ENCODE measurements at regions of chr3 and their contacts with region 1.

Region 1: GRCh38 chr3:170330366-170330765 is 27.1 kb upstream of the SKIL start:
- DNase-seq: peak; percentile 19 to 48
- H3K4me3 ChIP-seq: no peak overlapping the region
- H3K4me3 Mint-ChIP-seq: no peak overlapping the region
- H3K27ac Mint-ChIP-seq: peak overlapping the region; percentile 76
- H3K4me1 ChIP-seq: peaks cover 25% of the 10 kb centered on the region
- H3K4me1 Mint-ChIP-seq: no peaks in the 10 kb centered on the region
- H3K27me3 ChIP-seq: no peaks in the 10 kb centered on the region
- H3K27me3 Mint-ChIP-seq: no peaks in the 10 kb centered on the region
- CTCF ChIP-seq: no peak

Region 2: GRCh38 chr3:170307671-170308403 is 22.5 kb before region 1 on chr3:
- CTCF ChIA-PET with region 1: no interaction called
- POLR2A ChIA-PET with region 1: no interaction called
- intact Hi-C with region 1: loop called (anchors 1 kb)
- DNase-seq: peak; percentile 63 to 66
- H3K4me3 ChIP-seq: no peak overlapping the region
- H3K4me3 Mint-ChIP-seq: peak overlapping the region; percentile 29
- H3K27ac Mint-ChIP-seq: peak overlapping the region; percentile 91
- H3K4me1 ChIP-seq: peaks cover 29% of the 10 kb centered on the region
- H3K4me1 Mint-ChIP-seq: peaks cover 11% of the 10 kb centered on the region
- H3K27me3 ChIP-seq: no peaks in the 10 kb centered on the region
- H3K27me3 Mint-ChIP-seq: no peaks in the 10 kb centered on the region
- CTCF ChIP-seq: no peak

Region 3: DNA sequence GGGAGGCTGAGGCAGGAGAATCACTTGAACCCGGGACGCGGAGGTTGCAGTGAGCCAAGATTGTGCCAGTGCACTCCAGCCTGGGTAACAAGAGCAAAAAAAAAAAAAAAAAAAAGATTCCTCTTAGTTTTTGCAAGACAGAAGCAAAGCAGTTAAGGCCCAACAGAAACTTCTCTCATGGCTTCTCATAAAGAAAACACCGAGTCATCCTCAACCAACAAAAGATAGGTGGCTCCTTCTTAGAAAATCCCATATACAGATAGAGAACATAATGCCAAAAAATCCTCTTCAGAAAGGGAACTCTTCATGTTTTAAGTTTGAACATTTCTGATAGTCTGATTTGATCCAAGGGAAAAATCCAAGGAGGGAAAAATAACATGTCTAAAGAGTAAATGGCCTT is 14.6 kb after region 1 on chr3:
- CTCF ChIA-PET with region 1: no interaction called
- POLR2A ChIA-PET with region 1: no interaction called
- intact Hi-C with region 1: loop called (anchors 2 kb)
- DNase-seq: no peak
- H3K4me3 ChIP-seq: no peak overlapping the region
- H3K4me3 Mint-ChIP-seq: no peak overlapping the region
- H3K27ac Mint-ChIP-seq: no peak overlapping the region
- H3K4me1 ChIP-seq: peaks cover 18% of the 10 kb centered on the region
- H3K4me1 Mint-ChIP-seq: peaks cover 9% of the 10 kb centered on the region
- H3K27me3 ChIP-seq: no peaks in the 10 kb centered on the region
- H3K27me3 Mint-ChIP-seq: no peaks in the 10 kb centered on the region
- CTCF ChIP-seq: no peak